ENCODE measurements at regions of chr6 and their contacts with region 1.

Region 1: GRCh38 chr6:2563635-2564034 is 187.1 kb downstream of the MYLK4 start:
- DNase-seq: peak; percentile 33
- H3K4me3 Mint-ChIP-seq: no peak overlapping the region
- H3K27ac Mint-ChIP-seq: no peak overlapping the region
- H3K4me1 Mint-ChIP-seq: peaks cover 10% of the 10 kb centered on the region
- H3K27me3 Mint-ChIP-seq: peaks cover 17% of the 10 kb centered on the region

Region 2: GRCh38 chr6:2542858-2543218 is 20.8 kb before region 1 on chr6:
- CTCF ChIA-PET with region 1: interaction called, 3 read pairs
- intact Hi-C with region 1: loop called (anchors 1 kb)
- DNase-seq: peak; percentile 51
- H3K4me3 Mint-ChIP-seq: no peak overlapping the region
- H3K27ac Mint-ChIP-seq: no peak overlapping the region
- H3K4me1 Mint-ChIP-seq: peaks cover 24% of the 10 kb centered on the region
- H3K27me3 Mint-ChIP-seq: peaks cover 63% of the 10 kb centered on the region

Measured in activated naive CD4-positive, alpha-beta T cell treated with anti-CD3 and anti-CD28 coated beads for 36 hours (primary cell).